HepG2 (cell line): ENCODE measurements at regions of chr14 and their contacts with region 1.

Region 1: GRCh38 chr14:77760381-77761246 is at the start of gene SNW1:
- DNase-seq: peak; percentile 91
- ATAC-seq: peak; percentile 95
- H3K4me3 ChIP-seq: peak within 1 kb of the TSS; percentile 82 to 98 (median 92)
- H3K27ac ChIP-seq: peak within 1 kb of the TSS; percentile 80
- H3K4me1 ChIP-seq: peaks cover 29% of the 10 kb centered on the region
- H3K27me3 ChIP-seq: no peaks in the 10 kb centered on the region; a peak in 1 of 5 replicates
- CTCF ChIP-seq: no peak
- EP300 ChIP-seq: no peak
- POLR2A ChIP-seq: peak; percentile 81 to 84
- RAD21 ChIP-seq: no peak
- total RNA-seq, gene SNW1: 65.8 and 103 TPM in 2 replicates

Region 2: GRCh38 chr14:77707724-77708408 is 52.7 kb before region 1 on chr14 and contains the starts of genes ALKBH1 and SLIRP:
- CTCF ChIA-PET with region 1: no interaction called
- POLR2A ChIA-PET with region 1: interaction called, 7 read pairs
- in situ Hi-C with region 1: no loop called
- intact Hi-C with region 1: loop called (anchors 2 kb)
- DNase-seq: peak; percentile 81
- ATAC-seq: peak; percentile 97
- H3K4me3 ChIP-seq: peak within 1 kb of the TSS; percentile 92 to 97 (median 92)
- H3K27ac ChIP-seq: peak within 1 kb of the TSS; percentile 69
- H3K4me1 ChIP-seq: peaks cover 28% of the 10 kb centered on the region
- H3K27me3 ChIP-seq: no peaks in the 10 kb centered on the region; a peak in 1 of 5 replicates
- CTCF ChIP-seq: peak; percentile 14; the same call in 1 of the 2 replicates
- EP300 ChIP-seq: no peak
- POLR2A ChIP-seq: peak; percentile 91 to 93
- RAD21 ChIP-seq: no peak
- total RNA-seq, gene ALKBH1: 14.3 and 14.5 TPM in 2 replicates
- total RNA-seq, gene SLIRP: 548 and 656 TPM in 2 replicates

Region 3: GRCh38 chr14:77799863-77800730 is 39.5 kb after region 1 on chr14 and contains the start of gene ADCK1:
- CTCF ChIA-PET with region 1: no interaction called
- POLR2A ChIA-PET with region 1: interaction called, 7 read pairs
- in situ Hi-C with region 1: no loop called
- intact Hi-C with region 1: loop called (anchors 1 kb)
- DNase-seq: peak; percentile 68
- ATAC-seq: peak; percentile 95
- H3K4me3 ChIP-seq: peak within 1 kb of the TSS; percentile 69 to 94 (median 84)
- H3K27ac ChIP-seq: peak within 1 kb of the TSS; percentile 83
- H3K4me1 ChIP-seq: peaks cover 46% of the 10 kb centered on the region
- H3K27me3 ChIP-seq: no peaks in the 10 kb centered on the region
- CTCF ChIP-seq: peak; percentile 57
- EP300 ChIP-seq: no peak
- POLR2A ChIP-seq: peak; percentile 70 to 79
- RAD21 ChIP-seq: peak; percentile 63
- total RNA-seq, gene ADCK1: 2.1 and 3.9 TPM in 2 replicates

Region 4: GRCh38 chr14:77980475-77981321 is 220.1 kb after region 1 on chr14:
- CTCF ChIA-PET with region 1: no interaction called
- POLR2A ChIA-PET with region 1: no interaction called
- in situ Hi-C with region 1: no loop called
- intact Hi-C with region 1: no loop called
- DNase-seq: no peak
- ATAC-seq: peak; percentile 74
- H3K4me3 ChIP-seq: peak overlapping the region in 2 of 3 experiments; percentile 39 to 52; a peak in 3 of 6 replicates
- H3K27ac ChIP-seq: no peak overlapping the region
- H3K4me1 ChIP-seq: 0 out of 2 replicates have a peak, but pooled peaks cover 8% of the 10 kb centered on the region
- H3K27me3 ChIP-seq: peaks cover 2 to 13% of the 10 kb centered on the region in 2 experiments; a peak in 1 of 5 replicates
- CTCF ChIP-seq: no peak
- EP300 ChIP-seq: no peak
- POLR2A ChIP-seq: no peak
- RAD21 ChIP-seq: no peak